ENCODE measurements at regions of chr6 and their contacts with region 1.

Region 1: GRCh38 chr6:79076160-79076559 is 1.9 kb downstream of the PHIP start:
- DNase-seq: peak in 1 of 35 experiments; percentile 25
- ATAC-seq: no peak
- H3K4me3 ChIP-seq: peak overlapping the region; percentile 87 to 91
- H3K4me3 Mint-ChIP-seq: peak overlapping the region; percentile 86 to 96 (median 88)
- H3K27ac ChIP-seq: peak overlapping the region; percentile 69
- H3K27ac Mint-ChIP-seq: peak overlapping the region; percentile 84 to 94
- H3K4me1 ChIP-seq: peaks cover 3 to 25% of the 10 kb centered on the region in 2 experiments
- H3K4me1 Mint-ChIP-seq: peaks cover 58 to 63% (median 59%) of the 10 kb centered on the region in 3 donors
- H3K27me3 ChIP-seq: no peaks in the 10 kb centered on the region
- H3K27me3 Mint-ChIP-seq: no peaks in the 10 kb centered on the region

Region 2: DNA sequence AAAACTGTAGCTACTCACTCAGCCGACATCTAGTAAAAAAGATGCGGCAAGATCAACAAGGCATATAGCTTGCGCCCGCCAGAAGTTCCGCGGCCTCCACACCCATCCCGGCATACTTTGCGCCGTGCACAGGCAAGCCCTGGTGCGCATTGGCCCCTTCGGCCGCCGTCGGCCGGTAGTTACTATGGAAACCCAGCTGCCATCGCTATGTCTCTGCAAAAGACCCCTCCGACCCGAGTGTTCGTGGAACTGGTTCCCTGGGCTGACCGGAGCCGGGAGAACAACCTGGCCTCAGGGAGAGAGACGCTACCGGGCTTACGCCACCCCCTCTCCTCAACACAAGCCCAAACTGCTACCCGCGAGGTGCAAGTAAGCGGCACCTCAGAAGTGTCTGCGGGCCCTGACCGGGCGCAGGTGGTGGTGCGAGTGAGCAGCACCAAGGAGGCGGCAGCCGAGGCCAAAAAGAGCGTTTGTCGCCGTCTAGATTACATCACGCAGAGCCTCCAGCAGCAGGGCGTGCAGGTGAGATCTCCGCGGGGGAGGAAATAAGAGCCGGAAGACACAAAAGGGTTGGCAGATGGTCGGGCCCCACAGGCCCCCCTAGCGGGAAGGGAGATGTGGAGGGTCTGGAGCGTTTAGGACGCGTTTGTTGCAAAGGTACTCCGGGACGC is 208.7 kb before region 1 on chr6 and contains the start of gene IRAK1BP1:
- CTCF ChIA-PET with region 1: no interaction called
- POLR2A ChIA-PET with region 1: interaction called in 1 of 2 experiments, 12 read pairs
- DNase-seq: peak; percentile 42 to 79 (median 65)
- ATAC-seq: peak; percentile 91 to 95 (median 93)
- H3K4me3 ChIP-seq: peak within 1 kb of the TSS; percentile 82 to 89
- H3K4me3 Mint-ChIP-seq: peak within 1 kb of the TSS; percentile 92 to 99 (median 97)
- H3K27ac ChIP-seq: peak within 1 kb of the TSS; percentile 68
- H3K27ac Mint-ChIP-seq: peak within 1 kb of the TSS; percentile 93 to 96
- H3K4me1 ChIP-seq: peaks cover 2 to 12% of the 10 kb centered on the region in 2 experiments
- H3K4me1 Mint-ChIP-seq: peaks cover 19 to 26% (median 25%) of the 10 kb centered on the region in 3 donors
- H3K27me3 ChIP-seq: no peaks in the 10 kb centered on the region
- H3K27me3 Mint-ChIP-seq: no peaks in the 10 kb centered on the region
- total RNA-seq, gene IRAK1BP1: 2.1 to 5.5 (median 4.4) TPM

Region 3: GRCh38 chr6:79056226-79056625 is 19.9 kb before region 1 on chr6:
- CTCF ChIA-PET with region 1: interaction called in 1 of 2 experiments, 9 read pairs
- POLR2A ChIA-PET with region 1: interaction called in 1 of 2 experiments, 10 read pairs
- DNase-seq: no peak
- ATAC-seq: no peak
- H3K4me3 ChIP-seq: no peak overlapping the region
- H3K4me3 Mint-ChIP-seq: no peak overlapping the region
- H3K27ac ChIP-seq: no peak overlapping the region
- H3K27ac Mint-ChIP-seq: peak overlapping the region; percentile 1 to 36
- H3K4me1 ChIP-seq: no peaks in the 10 kb centered on the region
- H3K4me1 Mint-ChIP-seq: peaks cover 24 to 34% (median 30%) of the 10 kb centered on the region in 3 donors
- H3K27me3 ChIP-seq: no peaks in the 10 kb centered on the region
- H3K27me3 Mint-ChIP-seq: no peaks in the 10 kb centered on the region